GM23248 (cell line): ENCODE measurements at regions of chr15 and their contacts with region 1.

Region 1: GRCh38 chr15:40044717-40045571 is 6.0 kb upstream of the SRP14 start:
- DNase-seq: peak; percentile 94
- H3K4me3 ChIP-seq: peak overlapping the region; percentile 62
- H3K27ac ChIP-seq: no peak overlapping the region
- H3K4me1 ChIP-seq: peaks cover 31% of the 10 kb centered on the region
- H3K27me3 ChIP-seq: no peaks in the 10 kb centered on the region

Region 2: DNA sequence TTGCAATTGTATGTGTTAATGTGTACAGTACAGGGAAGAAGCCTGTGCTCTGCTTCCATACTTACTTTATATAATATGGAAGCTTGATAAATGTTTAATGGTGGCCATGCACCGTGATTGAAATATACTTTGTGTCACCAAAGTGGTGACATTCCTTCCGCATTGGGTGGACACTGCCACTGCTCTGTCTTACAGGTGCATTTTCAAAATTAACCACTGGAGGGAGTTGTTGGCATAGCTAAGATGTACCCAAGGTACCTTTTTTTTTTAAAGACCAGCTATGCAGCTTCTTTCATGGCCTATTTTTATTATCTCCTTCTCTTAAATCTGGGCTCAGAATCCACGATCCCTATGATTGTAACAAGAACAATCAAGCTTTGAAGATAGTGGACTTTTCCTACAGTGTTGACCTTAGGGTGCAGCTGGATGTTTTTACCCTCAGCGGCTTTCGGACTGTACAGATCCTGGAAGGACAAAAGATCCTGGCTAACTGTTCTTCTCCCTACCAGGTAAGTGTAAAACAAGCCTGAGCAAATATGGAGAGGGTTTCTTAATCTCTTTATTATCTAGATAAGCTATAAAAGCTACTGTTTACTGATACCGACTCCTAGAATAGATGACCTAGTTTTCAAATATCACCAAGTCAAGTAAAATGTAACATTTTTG is 172.3 kb after region 1 on chr15:
- in situ Hi-C with region 1: loop called (anchors 10 kb)
- DNase-seq: peak; percentile 70
- H3K4me3 ChIP-seq: no peak overlapping the region
- H3K27ac ChIP-seq: no peak overlapping the region
- H3K4me1 ChIP-seq: no peaks in the 10 kb centered on the region
- H3K27me3 ChIP-seq: no peaks in the 10 kb centered on the region

Region 3: DNA sequence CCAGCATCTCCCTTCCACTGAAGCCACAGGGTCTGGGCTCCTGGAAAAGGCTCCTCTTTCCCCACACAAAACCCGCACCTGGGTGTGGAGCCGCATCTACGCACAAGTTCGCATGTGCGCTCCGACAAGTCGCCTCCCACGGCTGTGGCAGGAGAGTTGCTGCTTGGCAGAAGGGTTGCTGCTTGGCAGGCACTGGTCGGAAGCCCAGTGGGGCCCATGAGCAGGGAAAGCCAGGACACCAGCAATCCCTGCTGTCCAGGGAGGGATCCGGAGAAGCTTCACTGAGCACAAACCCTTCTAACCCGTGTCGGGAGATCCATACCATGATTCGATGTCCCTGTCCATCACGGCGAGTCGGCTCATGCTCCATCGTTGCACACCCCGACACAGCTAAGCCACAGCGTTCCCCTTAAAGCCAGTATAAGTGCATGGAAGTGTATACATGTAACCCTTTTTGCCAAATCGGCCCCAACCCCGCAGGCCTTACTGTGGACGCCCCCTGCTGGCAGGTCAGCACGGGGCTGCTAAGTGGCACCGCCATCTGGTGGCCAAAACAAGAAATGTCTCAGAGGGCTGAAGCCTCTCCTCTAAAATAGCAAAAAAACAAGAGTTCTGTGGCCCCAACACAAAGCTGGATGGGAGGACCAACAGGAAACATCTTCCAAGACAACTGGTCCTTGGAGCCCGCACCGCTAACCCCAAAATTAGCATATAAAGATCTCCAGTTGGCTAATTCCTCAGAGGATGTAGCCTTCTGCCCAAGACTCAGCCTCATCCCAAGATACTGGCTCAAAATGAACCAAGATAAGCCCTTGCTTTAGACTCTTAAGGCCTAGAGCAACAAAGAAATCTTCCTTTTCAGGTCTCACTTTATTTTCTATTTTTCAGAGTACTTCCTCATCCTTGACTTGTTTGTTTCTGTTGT is 229.7 kb after region 1 on chr15:
- in situ Hi-C with region 1: loop called (anchors 10 kb)
- DNase-seq: peak; percentile 89
- H3K4me3 ChIP-seq: no peak overlapping the region
- H3K27ac ChIP-seq: no peak overlapping the region
- H3K4me1 ChIP-seq: no peaks in the 10 kb centered on the region
- H3K27me3 ChIP-seq: no peaks in the 10 kb centered on the region; the same call in none of the 2 replicates